ENCODE measurements at regions of chr7 and their contacts with region 1.

Region 1: DNA sequence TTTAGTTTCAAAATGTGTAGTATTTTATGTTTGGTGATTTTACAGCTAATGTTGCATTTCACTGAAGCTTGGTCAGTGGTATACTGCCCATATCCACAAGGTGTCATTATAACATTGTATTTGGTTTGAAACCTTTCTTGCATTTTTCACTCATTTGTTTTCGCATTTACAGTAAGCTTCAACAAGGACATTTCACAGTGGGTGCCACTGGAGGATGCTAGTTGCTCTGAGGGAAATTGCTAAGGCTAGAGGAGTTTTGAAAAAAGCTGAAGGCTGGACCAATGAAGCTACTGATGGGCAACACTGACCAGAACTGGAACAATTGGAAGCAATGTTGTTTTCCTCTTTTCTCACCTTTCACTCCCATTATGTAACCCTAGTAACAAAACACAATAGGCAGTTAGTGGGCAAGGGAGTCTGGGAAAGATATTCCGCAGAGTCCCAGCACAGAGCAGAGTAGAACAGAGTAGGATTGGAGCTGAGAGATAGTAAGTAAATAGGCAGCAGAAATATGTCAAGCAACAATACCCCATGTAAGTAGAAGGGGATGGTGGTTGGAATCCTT is 23.6 kb upstream of the SRI start:
- DNase-seq: no peak

Region 2: DNA sequence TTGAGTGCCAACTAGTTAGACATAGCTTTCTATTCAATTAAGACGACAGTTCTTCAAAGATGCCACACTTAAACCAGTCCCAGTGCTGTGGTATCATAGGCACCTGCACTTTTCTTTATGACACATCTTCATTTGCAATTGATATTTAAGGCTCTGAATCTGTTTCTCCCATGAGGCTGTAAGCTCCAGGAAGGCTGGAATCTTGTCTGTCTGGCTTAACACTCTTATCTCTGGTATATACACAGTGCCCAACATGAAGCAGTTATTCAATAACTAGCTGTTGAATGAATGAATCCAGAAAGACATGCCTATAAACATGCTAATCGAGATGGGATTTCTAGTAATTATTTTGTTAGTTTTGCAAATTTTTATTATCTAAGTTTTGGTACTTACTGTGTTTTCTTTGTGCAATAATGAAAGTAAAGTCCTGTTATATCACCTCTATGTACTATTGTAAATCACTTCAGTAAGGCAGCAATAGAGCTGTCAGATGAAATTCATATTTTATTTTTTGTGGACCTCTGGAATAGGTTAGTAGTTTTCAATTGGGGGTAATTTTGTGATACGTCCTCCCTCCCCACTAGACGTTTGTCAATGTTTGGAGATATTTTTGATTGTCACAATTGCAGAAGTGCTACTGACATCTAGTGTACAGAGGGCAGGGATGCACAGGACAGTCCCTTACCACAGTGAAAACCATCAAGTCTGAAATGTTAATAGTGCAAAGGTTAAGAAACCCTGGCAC is 114.5 kb after region 1 on chr7:
- intact Hi-C with region 1: loop called (anchors 1 kb)
- DNase-seq: no peak

Measured in cardiac septum (tissue), 1 donor.